PC-9 (cell line): ENCODE measurements at regions of chr10 and their contacts with region 1.

Region 1: DNA sequence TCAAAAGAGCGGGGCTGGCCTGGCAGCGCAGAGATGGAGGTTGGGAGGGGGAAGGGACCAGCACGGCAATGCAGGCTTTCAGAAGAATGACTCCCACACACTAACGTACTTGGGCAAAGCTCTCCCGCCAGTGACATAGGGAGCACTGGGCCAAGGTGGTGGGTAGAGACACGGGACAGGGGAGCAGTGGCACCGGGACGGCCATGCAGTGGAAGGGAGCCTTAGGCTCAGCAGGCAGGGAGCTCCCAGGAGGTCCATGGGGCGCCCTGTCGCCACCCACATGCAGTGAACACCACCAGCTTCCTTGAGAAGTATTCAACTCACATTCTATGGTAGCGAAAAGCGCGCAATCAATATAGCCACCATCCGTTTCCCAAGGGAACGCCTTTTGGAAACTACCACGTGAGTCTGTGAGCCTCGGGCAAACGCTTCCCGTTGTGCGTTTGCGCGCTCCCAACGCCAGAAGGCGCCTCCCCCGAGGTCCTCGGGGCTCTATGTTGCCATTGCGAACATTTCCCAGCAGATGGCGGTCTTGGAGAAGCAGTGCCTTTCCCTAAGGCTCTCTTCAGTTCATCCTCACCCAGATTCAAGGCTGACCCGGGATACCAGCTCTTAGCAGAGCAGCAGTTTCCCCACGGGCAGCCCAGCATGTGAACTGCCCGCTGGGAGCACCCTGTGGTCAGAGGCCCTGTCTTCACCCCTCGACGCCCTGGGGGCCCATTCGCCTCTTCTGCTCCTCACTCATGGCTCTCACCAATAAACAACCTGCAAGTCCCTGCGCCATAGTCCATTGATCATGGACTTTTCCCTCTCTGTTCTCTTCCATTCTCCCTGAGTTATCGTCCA is 16.4 kb upstream of the OPALIN start:
- DNase-seq: peak; percentile 66 to 80
- H3K4me3 ChIP-seq: peak overlapping the region; percentile 45; the same call in 1 of the 2 replicates
- H3K27ac ChIP-seq: no peak overlapping the region
- H3K4me1 ChIP-seq: no peaks in the 10 kb centered on the region
- H3K27me3 ChIP-seq: no peaks in the 10 kb centered on the region
- CTCF ChIP-seq: peak; percentile 85

Region 2: GRCh38 chr10:96440361-96441292 is 65.4 kb after region 1 on chr10:
- CTCF ChIA-PET with region 1: no interaction called
- POLR2A ChIA-PET with region 1: no interaction called
- intact Hi-C with region 1: no loop called
- DNase-seq: no peak
- H3K4me3 ChIP-seq: no peak overlapping the region
- H3K27ac ChIP-seq: no peak overlapping the region
- H3K4me1 ChIP-seq: no peaks in the 10 kb centered on the region
- H3K27me3 ChIP-seq: no peaks in the 10 kb centered on the region
- CTCF ChIP-seq: no peak

Region 3: DNA sequence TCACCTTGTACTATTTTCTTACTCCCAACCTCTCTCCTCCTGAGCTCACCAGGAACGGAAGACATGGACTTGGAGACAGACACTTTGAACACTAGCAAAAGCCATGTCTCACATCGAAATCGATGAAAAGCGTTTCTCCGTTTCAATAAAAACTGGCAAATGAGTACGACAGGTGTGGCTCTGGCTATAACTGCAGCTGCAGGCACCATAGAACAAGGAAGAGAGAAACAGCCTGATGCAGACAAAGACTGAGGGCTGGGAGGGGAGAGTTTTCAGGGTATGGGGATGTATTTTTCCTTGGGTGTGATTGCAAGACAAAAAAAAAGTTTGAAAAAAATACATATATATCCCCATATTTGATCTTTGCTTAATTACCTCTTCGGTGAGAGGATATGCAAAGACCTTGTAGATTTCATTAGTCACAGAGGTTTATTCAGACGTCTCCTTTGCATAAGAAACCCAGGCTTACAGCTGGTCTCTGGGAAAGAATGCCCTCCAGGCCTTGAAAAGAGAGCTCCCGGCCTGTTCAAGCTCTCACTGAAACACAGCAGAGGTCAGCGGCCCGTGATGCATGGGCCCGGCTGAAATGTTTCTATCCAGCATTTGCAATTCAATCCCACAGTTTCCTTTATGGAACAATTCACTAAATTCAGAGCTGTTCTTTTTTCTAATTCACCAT is 75.5 kb after region 1 on chr10:
- CTCF ChIA-PET with region 1: no interaction called
- POLR2A ChIA-PET with region 1: no interaction called
- intact Hi-C with region 1: no loop called
- DNase-seq: no peak
- H3K4me3 ChIP-seq: no peak overlapping the region
- H3K27ac ChIP-seq: no peak overlapping the region
- H3K4me1 ChIP-seq: no peaks in the 10 kb centered on the region
- H3K27me3 ChIP-seq: no peaks in the 10 kb centered on the region
- CTCF ChIP-seq: no peak

Region 4: GRCh38 chr10:96511044-96511945 is 136.1 kb after region 1 on chr10:
- CTCF ChIA-PET with region 1: interaction called, 15 read pairs
- POLR2A ChIA-PET with region 1: no interaction called
- intact Hi-C with region 1: loop called (anchors 1 kb)
- DNase-seq: peak in 1 of 2 experiments; percentile 26
- H3K4me3 ChIP-seq: no peak overlapping the region
- H3K27ac ChIP-seq: no peak overlapping the region
- H3K4me1 ChIP-seq: no peaks in the 10 kb centered on the region
- H3K27me3 ChIP-seq: no peaks in the 10 kb centered on the region
- CTCF ChIP-seq: peak; percentile 59

Region 5: GRCh38 chr10:96516337-96516736 is 141.1 kb after region 1 on chr10:
- CTCF ChIA-PET with region 1: interaction called, 15 read pairs
- POLR2A ChIA-PET with region 1: no interaction called
- intact Hi-C with region 1: loop called (anchors 1 kb)
- DNase-seq: no peak
- H3K4me3 ChIP-seq: no peak overlapping the region
- H3K27ac ChIP-seq: no peak overlapping the region
- H3K4me1 ChIP-seq: no peaks in the 10 kb centered on the region
- H3K27me3 ChIP-seq: no peaks in the 10 kb centered on the region
- CTCF ChIP-seq: no peak

Region 6: GRCh38 chr10:97210543-97210961 is 835.3 kb after region 1 on chr10:
- CTCF ChIA-PET with region 1: no interaction called
- POLR2A ChIA-PET with region 1: no interaction called
- intact Hi-C with region 1: loop called (anchors 2 kb)
- DNase-seq: peak in 1 of 2 experiments; percentile 55
- H3K4me3 ChIP-seq: no peak overlapping the region
- H3K27ac ChIP-seq: no peak overlapping the region
- H3K4me1 ChIP-seq: no peaks in the 10 kb centered on the region
- H3K27me3 ChIP-seq: no peaks in the 10 kb centered on the region
- CTCF ChIP-seq: peak; percentile 92